AG04450 (cell line): ENCODE measurements at regions of chr10 and their contacts with region 1.

Region 1: DNA sequence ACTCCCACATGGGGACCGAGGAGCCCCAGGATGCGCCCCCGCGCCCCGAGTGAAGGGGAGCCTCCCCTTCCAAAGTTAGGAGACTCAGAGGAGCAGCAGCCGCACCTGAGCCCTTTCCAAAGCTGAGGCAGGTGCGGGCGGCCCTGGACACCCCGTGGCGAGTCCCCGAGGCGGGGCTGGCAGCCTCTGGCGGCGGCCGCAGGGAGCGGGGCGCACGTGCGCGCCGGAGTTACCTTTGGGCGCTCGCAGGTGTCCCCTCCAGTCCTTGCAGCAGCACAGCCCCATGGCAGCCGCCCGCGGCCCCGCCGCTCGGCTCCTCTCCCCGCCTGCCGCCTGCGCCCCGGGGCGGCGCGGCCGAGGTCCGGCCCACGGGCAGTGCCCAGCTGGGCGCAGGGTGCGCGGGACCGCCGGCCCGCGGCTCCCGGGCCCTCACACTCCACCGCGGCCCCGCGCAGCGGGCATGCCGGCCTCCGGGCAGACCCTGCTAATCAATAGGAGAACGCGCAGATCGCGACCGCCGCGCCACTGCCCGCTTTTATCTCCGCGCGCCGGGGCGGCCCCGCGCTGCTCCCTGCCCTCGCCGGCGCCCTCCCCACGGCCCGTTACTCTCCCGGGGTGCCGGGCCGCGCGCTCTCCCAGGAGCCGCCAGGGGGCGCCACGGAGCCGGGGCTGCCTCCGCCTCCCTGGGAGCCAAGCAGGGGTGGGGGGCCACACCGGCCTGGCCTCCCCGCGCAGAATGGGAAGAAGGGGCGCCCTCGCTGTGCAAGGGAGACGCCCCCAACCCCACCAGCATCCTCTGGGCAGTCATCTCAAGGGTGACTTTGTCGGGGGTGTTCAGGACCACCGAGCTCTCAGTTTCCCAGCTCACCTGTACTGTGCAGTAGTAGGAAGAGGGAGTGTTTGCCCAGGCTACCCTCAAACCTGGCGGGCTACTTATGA is 80.8 kb downstream of the ARHGAP22 start:
- DNase-seq: no peak
- H3K4me3 ChIP-seq: peak overlapping the region; percentile 58
- H3K27ac ChIP-seq: no peak overlapping the region
- H3K27me3 ChIP-seq: no peaks in the 10 kb centered on the region
- CTCF ChIP-seq: peak; percentile 45; the same call in 1 of the 2 replicates

Region 2: DNA sequence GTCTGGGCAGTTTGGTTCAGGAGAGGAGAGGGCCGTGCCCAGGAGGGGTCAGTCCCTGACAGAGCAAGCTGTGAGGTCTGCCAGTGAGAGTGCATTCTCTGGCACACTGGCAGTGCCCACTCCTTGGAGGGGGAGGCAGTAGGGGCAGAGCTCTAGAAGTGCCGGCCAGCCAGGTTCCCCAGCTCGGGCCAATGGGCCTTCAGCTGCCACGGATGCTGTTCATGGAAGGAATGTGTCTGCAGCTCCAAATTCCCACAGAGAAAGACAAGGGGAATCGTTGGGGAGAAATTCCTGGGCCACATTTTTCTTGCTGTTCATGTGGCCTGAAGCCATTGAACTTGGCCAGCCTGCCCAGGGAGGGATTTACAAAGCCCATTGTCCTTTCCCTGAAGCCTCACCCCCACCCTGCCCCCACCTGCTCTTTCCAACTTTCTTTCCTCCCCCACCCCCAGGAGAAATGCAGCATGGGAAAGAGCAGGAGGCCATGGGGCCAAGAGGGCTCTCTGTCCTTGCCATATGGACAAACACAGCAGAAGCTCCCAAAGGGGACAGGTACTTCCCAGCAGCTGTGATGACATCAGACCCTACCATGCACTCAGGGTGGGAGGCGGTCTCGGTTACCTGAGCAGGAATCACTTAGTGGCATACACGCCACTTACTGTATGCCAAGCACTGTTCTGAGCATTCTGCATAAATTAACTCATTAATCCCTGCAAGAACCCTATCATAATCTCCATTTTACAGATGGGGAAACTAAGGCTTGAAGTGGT is 10.0 kb after region 1 on chr10:
- CTCF ChIA-PET with region 1: interaction called, 22 read pairs
- POLR2A ChIA-PET with region 1: interaction called, 3 read pairs
- DNase-seq: no peak
- H3K4me3 ChIP-seq: no peak overlapping the region
- H3K27ac ChIP-seq: no peak overlapping the region
- H3K27me3 ChIP-seq: no peaks in the 10 kb centered on the region
- CTCF ChIP-seq: no peak